GM10248 (cell line): ENCODE measurements at regions of chr18 and their contacts with region 1.

Region 1: GRCh38 chr18:59980188-59980637 is 80.4 kb downstream of the PMAIP1 start:
- DNase-seq: no peak
- CTCF ChIP-seq: no peak

Region 2: GRCh38 chr18:59876310-59876626 is 103.9 kb before region 1 on chr18:
- CTCF ChIA-PET with region 1: no interaction called
- POLR2A ChIA-PET with region 1: interaction called, 10 read pairs
- DNase-seq: peak; percentile 58
- CTCF ChIP-seq: no peak

Region 3: DNA sequence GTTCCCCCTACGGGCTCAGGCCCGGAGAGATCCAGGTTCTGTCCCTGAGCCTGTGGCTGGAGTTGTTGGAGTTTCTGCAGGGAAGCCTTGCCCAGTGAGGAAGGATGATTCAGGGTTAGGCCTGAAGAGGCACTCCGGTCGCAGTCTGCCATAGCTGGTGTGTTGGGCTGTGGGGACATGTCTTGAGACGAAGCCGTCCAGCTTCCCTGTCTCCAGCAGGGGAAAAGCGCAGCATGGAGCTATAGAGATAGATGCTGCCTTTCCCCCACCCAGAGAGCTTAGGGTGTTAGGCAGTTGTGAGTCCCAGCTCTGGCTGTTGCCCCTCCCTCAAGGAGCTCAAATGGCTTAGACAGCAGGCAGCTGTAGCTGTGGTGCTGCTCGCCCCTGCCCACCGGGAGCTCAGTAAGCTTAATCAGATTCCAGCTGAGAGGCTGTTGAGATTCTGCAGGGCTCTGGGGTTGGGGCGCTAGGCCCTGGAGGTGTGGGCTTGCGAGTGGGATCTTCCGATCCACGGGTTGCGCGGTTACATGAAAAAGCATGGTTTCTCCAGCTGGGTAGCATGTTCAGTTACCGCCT is 23.5 kb after region 1 on chr18:
- CTCF ChIA-PET with region 1: no interaction called
- POLR2A ChIA-PET with region 1: no interaction called
- DNase-seq: no peak
- CTCF ChIP-seq: no peak

Region 4: GRCh38 chr18:60053747-60054304 is 73.6 kb after region 1 on chr18:
- CTCF ChIA-PET with region 1: no interaction called
- POLR2A ChIA-PET with region 1: no interaction called
- DNase-seq: no peak
- CTCF ChIP-seq: no peak